ENCODE measurements at regions of chr15 and their contacts with region 1.

Region 1: GRCh38 chr15:83854321-83854720 is 200.4 kb downstream of the ADAMTSL3 start:
- DNase-seq: peak; percentile 63
- H3K4me3 Mint-ChIP-seq: no peak overlapping the region
- H3K27ac Mint-ChIP-seq: peak overlapping the region; percentile 85
- H3K4me1 Mint-ChIP-seq: peaks cover 48% of the 10 kb centered on the region
- H3K27me3 Mint-ChIP-seq: no peaks in the 10 kb centered on the region
- CTCF ChIP-seq: no peak

Region 2: DNA sequence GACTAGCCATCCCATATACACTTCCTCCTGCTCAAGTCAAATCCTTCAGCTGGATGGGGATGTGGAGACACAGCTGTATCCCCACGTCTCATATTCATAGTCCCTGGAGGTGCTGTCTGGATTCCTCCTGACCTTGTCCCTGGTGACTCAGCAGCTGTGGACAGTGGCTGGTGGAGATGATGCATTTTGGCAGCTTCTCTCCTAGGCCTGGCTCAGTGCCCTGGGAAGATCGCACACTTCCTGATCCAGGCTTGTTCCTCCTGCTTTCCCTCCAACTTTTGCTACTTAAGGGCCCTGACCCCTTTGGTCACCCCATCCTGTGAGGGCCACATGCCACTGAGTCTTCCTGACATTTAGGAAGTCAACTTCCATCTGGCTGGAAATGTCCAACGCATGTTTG is 156.0 kb before region 1 on chr15:
- CTCF ChIA-PET with region 1: no interaction called
- intact Hi-C with region 1: no loop called
- DNase-seq: no peak
- H3K4me3 Mint-ChIP-seq: no peak overlapping the region
- H3K27ac Mint-ChIP-seq: no peak overlapping the region
- H3K4me1 Mint-ChIP-seq: no peaks in the 10 kb centered on the region
- H3K27me3 Mint-ChIP-seq: peaks cover 13% of the 10 kb centered on the region
- CTCF ChIP-seq: no peak

Region 3: DNA sequence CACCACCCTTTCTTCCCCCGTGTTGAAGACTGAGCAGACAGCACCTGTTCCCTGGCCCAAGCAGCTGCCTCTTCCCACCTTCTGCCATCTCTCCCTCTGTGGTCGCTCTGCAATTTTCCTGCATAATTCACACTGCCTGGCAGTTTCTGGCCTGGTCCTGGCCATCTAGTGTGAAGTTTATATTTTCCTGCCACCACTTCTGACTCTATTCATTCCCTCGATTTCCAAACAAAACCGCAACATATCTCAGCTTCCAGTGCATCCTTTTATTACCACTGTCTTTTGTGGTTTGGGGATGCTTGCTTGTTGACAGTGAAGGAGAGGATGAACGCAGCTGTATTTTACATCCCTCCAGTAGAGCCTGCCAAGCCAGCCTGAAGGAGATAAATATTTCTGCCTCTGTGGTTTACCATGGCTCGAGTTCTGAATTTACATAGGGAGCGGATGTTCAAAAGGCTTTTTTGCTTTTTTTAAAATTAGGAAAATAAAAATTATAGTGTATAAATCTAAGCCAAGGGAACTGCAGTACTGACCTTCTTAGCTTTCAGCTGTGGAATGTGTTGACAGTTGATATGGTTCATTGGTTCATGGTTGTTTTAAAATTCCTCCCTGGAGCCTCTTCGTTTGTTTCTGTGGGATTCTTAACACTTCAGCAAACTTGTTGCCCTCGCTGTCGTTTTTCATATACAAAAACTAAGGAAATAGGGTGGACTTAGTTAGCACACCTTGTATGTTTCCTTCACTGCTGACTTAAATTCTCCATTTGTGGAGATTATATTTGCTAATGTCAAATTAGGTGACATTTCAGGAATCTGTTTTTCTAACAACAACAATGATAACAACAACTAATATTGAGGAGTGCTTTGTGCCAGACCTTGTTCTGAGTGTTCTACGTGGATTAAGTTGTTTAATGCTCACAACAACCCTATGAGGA is 50.1 kb after region 1 on chr15:
- CTCF ChIA-PET with region 1: no interaction called
- intact Hi-C with region 1: loop called (anchors 5 kb)
- DNase-seq: no peak
- H3K4me3 Mint-ChIP-seq: no peak overlapping the region
- H3K27ac Mint-ChIP-seq: no peak overlapping the region
- H3K4me1 Mint-ChIP-seq: no peaks in the 10 kb centered on the region
- H3K27me3 Mint-ChIP-seq: peaks cover 49% of the 10 kb centered on the region
- CTCF ChIP-seq: no peak

Region 4: GRCh38 chr15:83992324-83993031 is 138.2 kb after region 1 on chr15:
- CTCF ChIA-PET with region 1: no interaction called
- intact Hi-C with region 1: loop called (anchors 10 kb)
- DNase-seq: no peak
- H3K4me3 Mint-ChIP-seq: no peak overlapping the region
- H3K27ac Mint-ChIP-seq: no peak overlapping the region
- H3K4me1 Mint-ChIP-seq: no peaks in the 10 kb centered on the region
- H3K27me3 Mint-ChIP-seq: no peaks in the 10 kb centered on the region
- CTCF ChIP-seq: no peak